K562 (cell line): ENCODE measurements at regions of chr6 and their contacts with region 1.

Region 1: GRCh38 chr6:36463676-36464075 is 20.9 kb downstream of the KCTD20 start:
- DNase-seq: no peak
- ATAC-seq: no peak; the same call in 2 of the 3 replicates
- H3K4me3 ChIP-seq: no peak overlapping the region
- H3K27ac ChIP-seq: no peak overlapping the region
- H3K4me1 ChIP-seq: no peaks in the 10 kb centered on the region; a peak in 3 of 5 replicates
- H3K27me3 ChIP-seq: no peaks in the 10 kb centered on the region
- CTCF ChIP-seq: no peak
- EP300 ChIP-seq: no peak
- POLR2A ChIP-seq: no peak
- RAD21 ChIP-seq: no peak

Region 2: GRCh38 chr6:36451391-36451790 is 12.3 kb before region 1 on chr6:
- CTCF ChIA-PET with region 1: no interaction called
- POLR2A ChIA-PET with region 1: interaction called, 13 read pairs
- in situ Hi-C with region 1: no loop called
- intact Hi-C with region 1: no loop called
- DNase-seq: no peak
- ATAC-seq: no peak
- H3K4me3 ChIP-seq: no peak overlapping the region
- H3K27ac ChIP-seq: no peak overlapping the region
- H3K4me1 ChIP-seq: peaks cover 0 to 1% of the 10 kb centered on the region in 2 experiments; a peak in 1 of 5 replicates
- H3K27me3 ChIP-seq: no peaks in the 10 kb centered on the region
- CTCF ChIP-seq: no peak
- EP300 ChIP-seq: no peak
- POLR2A ChIP-seq: no peak
- RAD21 ChIP-seq: no peak

Region 3: GRCh38 chr6:36478051-36478526 is 14.4 kb after region 1 on chr6:
- CTCF ChIA-PET with region 1: no interaction called
- POLR2A ChIA-PET with region 1: interaction called, 16 read pairs
- in situ Hi-C with region 1: no loop called
- intact Hi-C with region 1: no loop called
- DNase-seq: peak; percentile 75 to 92 (median 80)
- ATAC-seq: peak; percentile 94
- H3K4me3 ChIP-seq: peak overlapping the region; percentile 3; the same call in 1 of the 2 replicates
- H3K27ac ChIP-seq: peak overlapping the region; percentile 24; the same call in 2 of the 3 replicates
- H3K4me1 ChIP-seq: peaks cover 12 to 15% of the 10 kb centered on the region in 2 experiments
- H3K27me3 ChIP-seq: no peaks in the 10 kb centered on the region
- CTCF ChIP-seq: no peak
- EP300 ChIP-seq: peak; percentile 92
- POLR2A ChIP-seq: no peak
- RAD21 ChIP-seq: no peak